CD4-positive, alpha-beta memory T cell (primary cell): ENCODE measurements at regions of chr19 and their contacts with region 1.

Region 1: GRCh38 chr19:2041683-2042484 is 9.2 kb downstream of the MKNK2 start:
- DNase-seq: peak; percentile 99 to 100 (median 99)
- H3K4me3 ChIP-seq: peak overlapping the region; percentile 36 to 57
- H3K4me3 Mint-ChIP-seq: peak overlapping the region; percentile 28 to 74 (median 60)
- H3K27ac ChIP-seq: peak overlapping the region; percentile 97
- H3K27ac Mint-ChIP-seq: peak overlapping the region; percentile 92 to 98 (median 96)
- H3K4me1 ChIP-seq: peaks cover 61% of the 10 kb centered on the region
- H3K4me1 Mint-ChIP-seq: peaks cover 9 to 51% (median 27%) of the 10 kb centered on the region in 4 donors
- H3K27me3 ChIP-seq: no peaks in the 10 kb centered on the region
- H3K27me3 Mint-ChIP-seq: no peaks in the 10 kb centered on the region

Region 2: GRCh38 chr19:2056182-2056836 is 14.4 kb after region 1 on chr19:
- CTCF ChIA-PET with region 1: interaction called, 10 read pairs
- POLR2A ChIA-PET with region 1: interaction called, 124 read pairs
- intact Hi-C with region 1: loop called (anchors 2 kb)
- DNase-seq: no peak
- H3K4me3 ChIP-seq: no peak overlapping the region
- H3K4me3 Mint-ChIP-seq: peak overlapping the region in 7 of 8 donors; percentile 21 to 67 (median 58)
- H3K27ac ChIP-seq: peak overlapping the region; percentile 57
- H3K27ac Mint-ChIP-seq: peak overlapping the region; percentile 88 to 95 (median 91)
- H3K4me1 ChIP-seq: peaks cover 72% of the 10 kb centered on the region
- H3K4me1 Mint-ChIP-seq: peaks cover 22 to 76% (median 49%) of the 10 kb centered on the region in 4 donors
- H3K27me3 ChIP-seq: no peaks in the 10 kb centered on the region
- H3K27me3 Mint-ChIP-seq: no peaks in the 10 kb centered on the region

Region 3: DNA sequence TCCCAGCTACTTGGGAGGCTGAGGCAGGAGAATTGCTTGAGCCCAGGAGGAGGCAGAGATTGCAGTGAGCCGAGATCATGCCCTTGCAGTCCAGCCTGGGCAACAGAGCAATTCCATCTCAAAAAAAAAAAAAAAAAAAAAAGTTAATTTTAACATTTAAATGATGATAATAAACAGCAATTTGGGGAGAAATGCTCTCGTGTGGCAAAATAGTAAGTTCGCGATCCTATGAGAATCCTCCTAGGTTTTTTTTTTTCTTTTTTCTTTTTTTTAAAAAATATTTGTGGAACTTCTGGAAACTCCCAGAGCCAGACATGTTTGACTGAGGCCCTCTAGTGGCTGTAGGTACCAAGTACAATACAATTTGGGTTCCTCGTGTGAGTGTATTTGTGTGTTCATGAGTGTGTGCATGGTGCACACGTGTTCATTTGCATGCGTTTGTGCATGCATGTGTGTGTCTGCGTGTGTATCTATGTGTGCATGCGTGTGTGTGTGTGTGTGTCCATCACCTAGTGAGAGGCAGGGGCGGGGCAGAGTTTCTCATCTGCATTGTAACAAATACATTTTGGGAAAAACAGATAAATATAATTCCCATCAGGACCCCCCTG is 349.3 kb after region 1 on chr19:
- CTCF ChIA-PET with region 1: no interaction called
- POLR2A ChIA-PET with region 1: no interaction called
- intact Hi-C with region 1: no loop called
- DNase-seq: peak; percentile 50 to 66 (median 51)
- H3K4me3 ChIP-seq: no peak overlapping the region
- H3K4me3 Mint-ChIP-seq: peak overlapping the region in 1 of 8 donors; percentile 78
- H3K27ac ChIP-seq: no peak overlapping the region
- H3K27ac Mint-ChIP-seq: peak overlapping the region in 2 of 7 donors; percentile 53 to 69
- H3K4me1 ChIP-seq: no peaks in the 10 kb centered on the region
- H3K4me1 Mint-ChIP-seq: peaks cover 2 to 15% (median 4%) of the 10 kb centered on the region in 4 donors
- H3K27me3 ChIP-seq: no peaks in the 10 kb centered on the region
- H3K27me3 Mint-ChIP-seq: peaks cover 2% of the 10 kb centered on the region in 2 donors